ENCODE measurements at regions of chr5 and their contacts with region 1.

Region 1: DNA sequence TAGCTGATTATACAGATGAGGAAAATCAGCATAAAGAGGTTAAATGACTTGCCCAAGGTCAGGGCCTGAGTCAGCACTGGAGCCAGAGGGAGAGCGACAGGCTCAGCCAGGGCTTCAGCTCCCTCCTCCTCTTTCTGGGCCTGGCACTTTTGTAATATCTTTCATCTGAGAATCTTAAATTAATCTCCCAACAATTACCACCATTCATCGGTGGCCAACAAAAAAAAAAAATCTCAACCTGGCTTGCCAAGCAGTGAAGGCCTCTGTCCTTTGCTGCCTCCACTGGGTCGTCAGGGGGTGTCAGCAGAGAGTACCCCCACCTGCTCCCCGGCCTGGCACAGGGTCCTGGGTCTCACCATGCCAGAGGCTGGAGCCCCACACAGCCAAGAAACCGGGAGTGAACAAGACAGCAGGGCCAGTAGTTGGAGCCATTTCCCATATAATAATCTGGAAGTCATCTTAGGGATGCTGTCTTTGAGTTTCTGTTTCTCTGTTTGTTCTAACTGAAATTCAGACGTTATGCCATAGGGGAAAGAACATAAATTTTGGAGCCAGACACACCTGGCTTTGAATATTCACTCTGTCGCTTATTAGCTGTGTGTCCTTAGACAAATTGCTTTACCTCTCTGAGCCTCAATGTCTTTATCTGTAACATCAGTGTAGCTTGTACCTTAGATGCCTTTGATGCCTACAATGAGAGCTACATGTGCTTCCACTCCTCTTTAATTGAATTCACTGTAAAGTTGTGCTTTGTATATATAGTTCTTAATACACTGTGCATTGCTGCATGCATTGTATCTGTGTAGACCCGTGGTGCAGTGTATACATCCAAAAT is 299.9 kb upstream of the MSX2 start:
- DNase-seq: no peak
- H3K4me3 ChIP-seq: no peak overlapping the region
- H3K27ac ChIP-seq: no peak overlapping the region
- H3K4me1 ChIP-seq: peaks cover 3 to 40% (median 11%) of the 10 kb centered on the region in 3 donors
- H3K27me3 ChIP-seq: peaks cover 0 to 65% (median 0%) of the 10 kb centered on the region in 4 donors
- CTCF ChIP-seq: no peak
- POLR2A ChIP-seq: no peak

Region 2: DNA sequence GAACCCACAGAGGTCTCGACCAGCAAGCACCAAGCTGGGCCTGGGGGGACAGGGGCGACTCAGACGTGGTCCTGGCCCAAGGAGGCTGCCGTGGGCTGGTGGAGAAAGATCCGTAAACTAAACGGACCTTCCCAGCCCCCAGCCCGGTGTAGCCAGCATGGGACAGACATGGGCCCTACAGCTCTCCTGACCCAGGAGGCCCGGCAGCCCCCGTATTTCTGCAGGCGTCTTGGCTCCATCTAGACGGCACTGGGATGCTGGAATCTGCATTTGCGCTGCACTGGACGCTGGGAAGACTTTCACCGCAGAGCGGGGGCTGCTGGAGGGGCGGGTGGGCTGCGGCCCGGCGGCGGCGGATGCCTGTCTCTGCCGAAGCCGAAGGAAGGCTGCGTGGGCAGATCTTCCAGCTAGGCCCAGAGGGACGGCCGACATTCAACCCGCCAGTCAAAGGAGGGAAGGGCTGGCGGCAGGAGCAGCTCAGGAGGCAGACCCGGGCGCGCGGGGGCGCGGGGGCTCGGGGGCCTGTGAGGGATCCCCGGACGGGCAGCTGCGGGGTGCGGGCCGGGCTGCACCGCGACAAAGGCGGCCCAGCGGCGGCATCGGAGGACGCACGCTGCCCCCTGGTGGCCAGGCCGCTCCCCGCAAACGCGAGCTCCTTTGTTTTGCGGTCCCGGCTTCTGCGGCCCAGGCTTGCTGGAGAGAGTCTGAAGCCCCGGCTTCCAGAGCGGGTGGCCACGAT is 112.7 kb before region 1 on chr5:
- intact Hi-C with region 1: no loop called
- DNase-seq: no peak
- H3K4me3 ChIP-seq: peak overlapping the region; percentile 3 to 65 (median 34)
- H3K27ac ChIP-seq: no peak overlapping the region
- H3K4me1 ChIP-seq: peaks cover 3 to 11% (median 3%) of the 10 kb centered on the region in 3 donors
- H3K27me3 ChIP-seq: peaks cover 0 to 77% (median 0%) of the 10 kb centered on the region in 4 donors
- CTCF ChIP-seq: peak; percentile 58 to 88 (median 84)
- POLR2A ChIP-seq: no peak

Region 3: DNA sequence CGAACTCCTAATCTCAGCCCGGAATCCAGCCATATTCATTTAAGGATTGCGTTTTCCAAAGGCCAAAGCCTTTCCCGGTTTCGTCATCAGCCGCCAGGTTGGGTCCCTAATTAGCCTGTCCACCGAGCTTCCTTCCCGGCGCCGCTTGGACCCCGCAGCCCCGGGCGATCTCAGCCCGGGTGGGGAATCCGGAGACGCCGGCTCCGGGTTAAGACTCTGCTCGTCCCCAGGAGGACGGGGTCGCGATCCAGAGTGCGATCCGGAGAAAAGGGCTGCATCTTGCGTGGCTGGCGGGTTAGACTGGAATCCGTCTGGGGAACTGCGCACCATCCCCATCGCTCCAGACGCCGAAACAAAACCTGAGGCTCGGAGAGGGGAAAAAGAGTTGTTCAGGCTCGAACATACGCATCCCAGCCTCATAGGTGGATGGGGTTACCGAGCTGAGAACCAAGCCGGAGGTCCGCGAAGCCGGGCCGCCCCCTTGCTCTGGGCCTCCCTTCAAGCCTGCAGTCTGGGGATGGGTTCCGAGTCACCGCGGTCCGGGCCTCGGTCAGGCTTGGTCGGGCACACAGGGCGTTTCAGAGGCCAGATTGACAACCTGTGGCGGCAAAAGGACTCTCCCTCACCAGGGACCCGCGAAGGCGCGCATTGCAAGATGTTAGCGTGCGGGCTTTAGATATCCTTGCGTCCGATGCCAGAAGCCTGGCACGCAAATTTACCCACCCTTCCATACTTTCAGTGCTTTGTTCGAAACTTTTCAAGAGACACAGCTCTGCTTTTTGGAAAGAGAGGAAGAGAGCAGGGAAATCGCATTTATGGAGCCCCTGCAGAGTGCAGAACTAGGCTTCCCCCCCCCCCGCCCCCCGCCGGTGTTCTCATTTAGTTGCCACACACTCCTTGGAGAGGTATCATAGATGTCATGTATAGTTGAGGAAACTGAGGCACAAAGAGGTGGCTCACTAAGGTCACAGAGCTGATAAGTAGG is 307.9 kb after region 1 on chr5:
- intact Hi-C with region 1: loop called (anchors 5 kb)
- DNase-seq: no peak
- H3K4me3 ChIP-seq: no peak overlapping the region
- H3K27ac ChIP-seq: no peak overlapping the region
- H3K4me1 ChIP-seq: peaks cover 6 to 22% (median 9%) of the 10 kb centered on the region in 3 donors
- H3K27me3 ChIP-seq: peaks cover 8 to 100% (median 38%) of the 10 kb centered on the region in 4 donors
- CTCF ChIP-seq: no peak
- POLR2A ChIP-seq: no peak

Region 4: GRCh38 chr5:174793684-174794328 is 369.4 kb after region 1 on chr5:
- intact Hi-C with region 1: loop called (anchors 5 kb)
- DNase-seq: no peak
- H3K4me3 ChIP-seq: no peak overlapping the region
- H3K27ac ChIP-seq: no peak overlapping the region
- H3K4me1 ChIP-seq: peaks cover 0 to 11% (median 6%) of the 10 kb centered on the region in 3 donors
- H3K27me3 ChIP-seq: peaks cover 0 to 62% (median 0%) of the 10 kb centered on the region in 4 donors
- CTCF ChIP-seq: peak; percentile 13 to 90 (median 77)
- POLR2A ChIP-seq: no peak